OCI-LY7 (cell line): ENCODE measurements at regions of chr17 and their contacts with region 1.

Region 1: GRCh38 chr17:42997984-42998938 is at the start of gene RPL27:
- DNase-seq: peak; percentile 100
- H3K4me3 ChIP-seq: peak within 1 kb of the TSS; percentile 95
- H3K27ac ChIP-seq: peak within 1 kb of the TSS; percentile 63
- H3K4me1 ChIP-seq: peaks cover 20% of the 10 kb centered on the region
- CTCF ChIP-seq: peak; percentile 93
- total RNA-seq, gene RPL27: 1,550 and 2,299 TPM in 2 replicates

Region 2: GRCh38 chr17:42832974-42833766 is 165.1 kb before region 1 on chr17 and contains the start of gene PSME3:
- CTCF ChIA-PET with region 1: no interaction called
- POLR2A ChIA-PET with region 1: interaction called, 7 read pairs
- intact Hi-C with region 1: loop called (anchors 5 kb)
- DNase-seq: peak; percentile 91
- H3K4me3 ChIP-seq: peak within 1 kb of the TSS; percentile 99
- H3K27ac ChIP-seq: peak within 1 kb of the TSS; percentile 60
- H3K4me1 ChIP-seq: peaks cover 15% of the 10 kb centered on the region
- CTCF ChIP-seq: no peak
- total RNA-seq, gene PSME3: 80.3 and 81.9 TPM in 2 replicates

Region 3: GRCh38 chr17:42980398-42981397 is 17.6 kb before region 1 on chr17 and contains the start of gene RUNDC1:
- CTCF ChIA-PET with region 1: interaction called, 4 read pairs
- POLR2A ChIA-PET with region 1: interaction called, 21 read pairs
- intact Hi-C with region 1: loop called (anchors 1 kb)
- DNase-seq: peak; percentile 94
- H3K4me3 ChIP-seq: peak within 1 kb of the TSS; percentile 78
- H3K27ac ChIP-seq: peak within 1 kb of the TSS; percentile 84
- H3K4me1 ChIP-seq: peaks cover 41% of the 10 kb centered on the region
- CTCF ChIP-seq: peak; percentile 50
- total RNA-seq, gene RUNDC1: 11.1 and 12.1 TPM in 2 replicates